Activated CD4-positive, alpha-beta memory T cell treated with anti-CD3 and anti-CD28 coated beads for 36 hours (primary cell): ENCODE measurements at regions of chr7 and their contacts with region 1.

Region 1: GRCh38 chr7:92134271-92135051 is at the start of gene CYP51A1:
- DNase-seq: peak; percentile 95
- H3K4me3 Mint-ChIP-seq: peak within 1 kb of the TSS; percentile 99
- H3K27ac Mint-ChIP-seq: peak within 1 kb of the TSS; percentile 100
- H3K4me1 Mint-ChIP-seq: peaks cover 30% of the 10 kb centered on the region
- H3K27me3 Mint-ChIP-seq: peaks cover 2% of the 10 kb centered on the region
- total RNA-seq, gene CYP51A1: 72.3 to 74.7 TPM

Region 2: GRCh38 chr7:91089382-91089963 is 1045.0 kb before region 1 on chr7:
- CTCF ChIA-PET with region 1: no interaction called
- POLR2A ChIA-PET with region 1: no interaction called
- intact Hi-C with region 1: loop called (anchors 10 kb)
- DNase-seq: no peak
- H3K4me3 Mint-ChIP-seq: no peak overlapping the region
- H3K27ac Mint-ChIP-seq: no peak overlapping the region
- H3K4me1 Mint-ChIP-seq: peaks cover 10% of the 10 kb centered on the region
- H3K27me3 Mint-ChIP-seq: peaks cover 1% of the 10 kb centered on the region

Region 3: DNA sequence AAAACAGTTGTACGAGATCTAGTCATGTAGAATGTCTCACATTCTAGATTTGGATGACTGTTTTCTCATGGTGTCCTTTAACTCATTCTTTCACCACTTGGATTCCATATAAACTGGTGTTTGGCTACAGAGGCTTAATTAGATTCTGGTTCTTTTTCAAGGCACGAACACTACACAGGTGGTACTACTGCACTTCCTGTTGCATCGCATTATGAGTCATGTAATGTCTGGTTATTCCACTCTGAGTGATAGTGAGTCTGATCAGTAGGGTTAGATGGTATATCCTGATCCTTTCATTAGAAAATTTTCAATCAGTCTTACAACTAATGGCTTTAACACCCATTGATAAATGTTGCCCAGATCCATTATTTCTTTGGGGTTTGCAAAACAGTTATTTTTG is 205.0 kb before region 1 on chr7:
- CTCF ChIA-PET with region 1: no interaction called
- POLR2A ChIA-PET with region 1: no interaction called
- intact Hi-C with region 1: no loop called
- DNase-seq: no peak
- H3K4me3 Mint-ChIP-seq: no peak overlapping the region
- H3K27ac Mint-ChIP-seq: no peak overlapping the region
- H3K4me1 Mint-ChIP-seq: peaks cover 6% of the 10 kb centered on the region
- H3K27me3 Mint-ChIP-seq: peaks cover 13% of the 10 kb centered on the region

Region 4: GRCh38 chr7:91940572-91941341 is 193.7 kb before region 1 on chr7 and contains the start of gene AKAP9:
- CTCF ChIA-PET with region 1: interaction called, 3 read pairs
- POLR2A ChIA-PET with region 1: interaction called, 3 read pairs
- intact Hi-C with region 1: loop called (anchors 1 kb)
- DNase-seq: peak; percentile 93
- H3K4me3 Mint-ChIP-seq: peak within 1 kb of the TSS; percentile 92
- H3K27ac Mint-ChIP-seq: peak within 1 kb of the TSS; percentile 86
- H3K4me1 Mint-ChIP-seq: peaks cover 35% of the 10 kb centered on the region
- H3K27me3 Mint-ChIP-seq: peaks cover 1% of the 10 kb centered on the region
- total RNA-seq, gene AKAP9: 23.5 to 25.3 TPM

Region 5: DNA sequence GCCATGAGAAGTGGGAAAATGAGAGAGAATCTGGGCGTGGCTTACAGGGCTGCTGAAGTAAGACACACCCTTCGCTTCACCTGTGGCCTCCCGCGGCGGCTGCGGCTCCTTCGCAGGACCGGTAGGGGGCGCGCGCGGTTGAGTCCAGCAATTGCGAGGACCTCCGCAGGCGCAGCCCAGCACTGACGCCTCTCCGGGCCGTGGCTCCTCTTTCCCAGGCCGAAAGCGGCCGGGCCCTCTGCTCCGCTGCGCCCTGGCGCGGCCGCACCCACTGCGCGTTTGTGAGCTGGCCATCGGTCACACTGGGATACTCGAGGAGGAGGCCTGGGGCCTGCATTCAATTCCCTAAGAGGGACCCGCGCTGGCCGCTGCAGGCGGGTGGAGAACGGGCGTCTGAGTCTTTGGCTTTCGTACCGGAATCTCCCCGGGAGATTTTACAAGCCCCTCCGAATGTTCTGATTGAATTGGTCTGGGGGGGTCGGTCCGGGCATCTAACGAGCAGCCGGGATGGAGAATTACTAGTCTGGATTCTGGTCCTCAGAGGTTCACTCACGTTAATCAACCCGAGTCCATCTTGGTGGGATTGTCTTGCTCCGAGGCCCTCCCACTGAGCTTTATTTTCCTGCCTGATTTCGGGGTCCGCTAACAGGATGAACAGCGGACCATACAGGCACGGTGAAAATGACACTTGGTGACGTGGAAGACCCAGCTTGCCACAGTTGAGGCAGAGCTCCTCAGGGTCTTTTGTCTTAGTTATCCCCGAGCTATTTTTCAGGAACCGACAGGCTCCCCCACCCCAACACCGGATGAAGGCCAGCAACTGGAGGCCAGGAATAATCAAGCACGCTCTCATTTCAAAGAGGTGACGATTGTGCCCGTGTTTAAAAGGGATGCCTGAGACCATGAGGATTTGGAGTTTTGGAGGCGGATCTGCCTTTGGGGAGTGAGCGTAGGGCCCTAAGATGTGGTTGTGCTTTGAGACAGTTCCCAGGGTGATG is 44.8 kb after region 1 on chr7 and contains the start of gene LRRD1:
- CTCF ChIA-PET with region 1: interaction called, 5 read pairs
- POLR2A ChIA-PET with region 1: no interaction called
- intact Hi-C with region 1: loop called (anchors 1 kb)
- DNase-seq: peak; percentile 94
- H3K4me3 Mint-ChIP-seq: peak within 1 kb of the TSS; percentile 67
- H3K27ac Mint-ChIP-seq: no peak within 1 kb of the TSS
- H3K4me1 Mint-ChIP-seq: peaks cover 10% of the 10 kb centered on the region
- H3K27me3 Mint-ChIP-seq: no peaks in the 10 kb centered on the region
- total RNA-seq, gene LRRD1: not detected

Region 6: DNA sequence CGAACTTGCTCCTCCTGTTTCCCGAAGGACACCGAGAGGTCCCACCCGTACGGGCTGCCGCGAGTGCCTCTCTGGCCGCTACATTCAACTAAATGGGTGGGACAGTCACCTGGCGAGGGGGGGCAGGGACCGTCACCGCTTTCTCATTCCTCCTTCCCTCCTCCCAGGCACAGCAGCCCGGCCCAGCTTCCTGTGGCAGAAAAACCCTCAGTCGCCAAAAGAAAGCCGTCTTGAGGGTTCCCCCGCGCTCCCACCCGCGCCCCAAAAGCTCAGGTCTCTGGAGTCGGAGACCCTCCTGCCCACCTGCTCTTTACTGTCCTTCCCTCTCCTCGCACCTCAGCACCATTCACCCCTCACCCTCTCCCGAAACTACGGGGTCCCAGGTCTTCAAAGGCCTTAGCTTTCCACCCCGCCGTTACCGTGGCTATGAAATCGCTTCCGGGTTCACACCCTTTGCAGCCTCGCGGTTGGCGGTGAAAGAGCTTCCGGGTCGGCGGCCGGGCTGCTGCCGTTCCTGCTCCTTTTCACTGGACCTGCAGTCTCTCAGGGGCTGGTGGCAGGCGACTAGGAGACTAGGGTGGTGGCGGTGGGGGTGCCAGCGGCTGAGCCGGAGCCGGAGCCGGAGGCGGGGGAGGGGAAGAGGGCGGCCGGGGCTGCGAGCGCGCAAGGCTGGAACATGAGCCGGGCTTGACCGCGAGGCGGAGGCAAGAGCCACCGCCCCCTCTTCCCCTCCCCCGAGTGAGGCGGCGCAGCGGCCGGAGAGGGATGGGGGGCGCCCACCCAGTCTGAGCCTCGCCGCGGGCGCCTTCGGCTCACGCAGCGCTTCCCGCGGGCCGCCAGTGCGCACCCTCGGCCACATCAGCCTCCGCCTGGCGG is 111.3 kb after region 1 on chr7 and contains the starts of genes ANKIB1 and KRIT1:
- CTCF ChIA-PET with region 1: interaction called, 4 read pairs
- POLR2A ChIA-PET with region 1: interaction called, 5 read pairs
- intact Hi-C with region 1: loop called (anchors 1 kb)
- DNase-seq: peak; percentile 92
- H3K4me3 Mint-ChIP-seq: peak within 1 kb of the TSS; percentile 99
- H3K27ac Mint-ChIP-seq: peak within 1 kb of the TSS; percentile 100
- H3K4me1 Mint-ChIP-seq: peaks cover 29% of the 10 kb centered on the region
- H3K27me3 Mint-ChIP-seq: no peaks in the 10 kb centered on the region
- total RNA-seq, gene ANKIB1: 34.8 to 39.9 TPM
- total RNA-seq, gene KRIT1: 29.2 to 29.3 TPM